IMR-90 (cell line): ENCODE measurements at regions of chr9 and their contacts with region 1.

Region 1: GRCh38 chr9:115013998-115014397 is 83.6 kb upstream of the TNFSF8 start:
- DNase-seq: peak; percentile 82
- ATAC-seq: peak; percentile 45
- H3K4me3 ChIP-seq: no peak overlapping the region
- H3K27ac ChIP-seq: no peak overlapping the region
- H3K4me1 ChIP-seq: peaks cover 10% of the 10 kb centered on the region
- H3K27me3 ChIP-seq: peaks cover 5% of the 10 kb centered on the region
- CTCF ChIP-seq: peak; percentile 91
- POLR2A ChIP-seq: peak; percentile 53; the same call in 1 of the 2 replicates
- RAD21 ChIP-seq: peak; percentile 98

Region 2: DNA sequence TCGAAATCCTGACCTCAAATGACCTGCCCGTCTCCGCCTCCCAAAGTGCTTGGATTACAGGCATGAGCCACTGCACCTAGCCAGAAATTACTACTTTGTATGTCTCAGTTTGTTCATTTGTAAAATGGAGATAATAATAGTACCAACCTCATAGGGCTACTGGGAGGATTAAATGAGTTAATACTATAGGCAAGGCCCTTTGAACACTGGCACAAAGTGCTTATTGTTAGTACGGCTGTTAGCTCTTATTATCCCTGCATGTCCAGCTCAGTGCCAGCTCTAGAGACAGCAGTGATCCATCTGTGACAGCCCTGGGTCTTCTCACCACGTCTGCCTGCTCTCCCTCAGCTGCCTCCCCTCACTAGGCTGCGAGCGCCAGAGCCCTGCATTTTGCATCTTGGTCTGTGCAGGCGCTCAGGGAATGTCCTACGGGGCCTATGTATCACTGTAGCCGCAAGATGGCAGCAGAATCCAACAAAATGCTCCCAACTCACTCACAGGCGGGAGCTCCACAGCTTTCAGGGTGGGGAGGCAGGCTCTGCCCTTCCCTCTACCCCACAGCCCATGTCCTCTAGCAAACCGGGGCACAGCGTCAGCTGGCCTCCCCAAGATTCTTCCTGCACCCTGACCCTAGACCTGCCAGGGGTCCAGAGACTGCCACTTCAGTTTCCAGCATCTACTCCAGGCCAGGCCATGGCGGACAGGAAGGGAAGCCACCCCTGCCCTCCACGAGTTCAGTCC is 608.5 kb before region 1 on chr9:
- CTCF ChIA-PET with region 1: interaction called, 5 read pairs
- POLR2A ChIA-PET with region 1: no interaction called
- dilution Hi-C with region 1: no loop called
- in situ Hi-C with region 1: loop called (anchors 10 kb)
- intact Hi-C with region 1: loop called (anchors 1 kb)
- DNase-seq: peak; percentile 78
- ATAC-seq: peak; percentile 99
- H3K4me3 ChIP-seq: no peak overlapping the region
- H3K27ac ChIP-seq: no peak overlapping the region
- H3K4me1 ChIP-seq: no peaks in the 10 kb centered on the region
- H3K27me3 ChIP-seq: peaks cover 5% of the 10 kb centered on the region; the same call in 1 of the 2 replicates
- CTCF ChIP-seq: peak; percentile 93
- POLR2A ChIP-seq: no peak
- RAD21 ChIP-seq: peak; percentile 95

Region 3: GRCh38 chr9:114434878-114435311 is 579.1 kb before region 1 on chr9:
- CTCF ChIA-PET with region 1: no interaction called
- POLR2A ChIA-PET with region 1: no interaction called
- dilution Hi-C with region 1: no loop called
- in situ Hi-C with region 1: no loop called
- intact Hi-C with region 1: loop called (anchors 10 kb)
- DNase-seq: peak; percentile 37
- ATAC-seq: peak; percentile 91
- H3K4me3 ChIP-seq: no peak overlapping the region
- H3K27ac ChIP-seq: no peak overlapping the region
- H3K4me1 ChIP-seq: no peaks in the 10 kb centered on the region
- H3K27me3 ChIP-seq: peaks cover 13% of the 10 kb centered on the region
- CTCF ChIP-seq: peak; percentile 69
- POLR2A ChIP-seq: no peak
- RAD21 ChIP-seq: peak; percentile 79

Region 4: GRCh38 chr9:114662081-114662989 is 351.7 kb before region 1 on chr9:
- CTCF ChIA-PET with region 1: interaction called, 3 read pairs
- POLR2A ChIA-PET with region 1: no interaction called
- dilution Hi-C with region 1: no loop called
- in situ Hi-C with region 1: loop called (anchors 5 kb)
- intact Hi-C with region 1: loop called (anchors 1 kb)
- DNase-seq: peak; percentile 33
- ATAC-seq: peak; percentile 98
- H3K4me3 ChIP-seq: no peak overlapping the region
- H3K27ac ChIP-seq: no peak overlapping the region
- H3K4me1 ChIP-seq: no peaks in the 10 kb centered on the region
- H3K27me3 ChIP-seq: peaks cover 30% of the 10 kb centered on the region
- CTCF ChIP-seq: peak; percentile 84
- POLR2A ChIP-seq: no peak
- RAD21 ChIP-seq: peak; percentile 92

Region 5: DNA sequence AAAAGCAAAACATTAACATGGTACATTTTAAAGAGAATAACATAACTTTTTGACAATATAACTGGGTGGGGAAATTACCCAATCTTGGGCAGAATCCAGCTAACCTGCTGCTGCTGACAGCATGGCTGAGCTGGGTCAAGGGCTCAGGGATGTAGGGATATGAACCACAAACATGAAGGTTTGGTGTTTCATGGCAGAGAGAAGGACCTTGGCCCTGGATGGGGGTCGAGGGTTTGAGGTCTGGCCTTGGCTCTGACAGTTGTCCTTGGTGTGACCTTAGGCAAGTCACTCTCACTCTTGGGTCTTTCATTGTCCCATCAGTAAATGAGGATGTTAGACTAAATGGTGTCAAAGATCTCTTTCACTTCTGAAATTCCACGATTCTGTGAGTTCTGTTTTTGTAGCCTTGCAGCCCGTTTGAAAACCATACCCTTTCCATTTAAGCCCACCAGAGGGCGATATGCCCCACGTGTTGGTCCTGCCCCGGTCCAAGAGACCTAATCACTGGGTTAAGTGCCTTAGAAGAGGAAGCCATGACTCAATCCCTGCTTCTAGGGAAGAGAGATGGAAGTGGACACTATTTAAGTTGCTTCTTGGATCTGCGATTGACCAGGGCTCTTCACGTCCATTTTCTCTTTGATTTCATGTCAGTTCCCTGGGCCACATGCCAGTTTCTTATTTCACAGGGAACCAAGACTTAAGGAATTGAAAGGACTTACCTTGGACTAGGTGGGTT is 275.2 kb before region 1 on chr9:
- CTCF ChIA-PET with region 1: interaction called, 7 read pairs
- POLR2A ChIA-PET with region 1: no interaction called
- dilution Hi-C with region 1: no loop called
- in situ Hi-C with region 1: loop called (anchors 5 kb)
- intact Hi-C with region 1: loop called (anchors 1 kb)
- DNase-seq: peak; percentile 89
- ATAC-seq: peak; percentile 95
- H3K4me3 ChIP-seq: no peak overlapping the region
- H3K27ac ChIP-seq: no peak overlapping the region
- H3K4me1 ChIP-seq: peaks cover 2% of the 10 kb centered on the region; the same call in 1 of the 2 replicates
- H3K27me3 ChIP-seq: no peaks in the 10 kb centered on the region; the same call in none of the 2 replicates
- CTCF ChIP-seq: peak; percentile 97
- POLR2A ChIP-seq: peak; percentile 58; the same call in 1 of the 2 replicates
- RAD21 ChIP-seq: peak; percentile 99

Region 6: DNA sequence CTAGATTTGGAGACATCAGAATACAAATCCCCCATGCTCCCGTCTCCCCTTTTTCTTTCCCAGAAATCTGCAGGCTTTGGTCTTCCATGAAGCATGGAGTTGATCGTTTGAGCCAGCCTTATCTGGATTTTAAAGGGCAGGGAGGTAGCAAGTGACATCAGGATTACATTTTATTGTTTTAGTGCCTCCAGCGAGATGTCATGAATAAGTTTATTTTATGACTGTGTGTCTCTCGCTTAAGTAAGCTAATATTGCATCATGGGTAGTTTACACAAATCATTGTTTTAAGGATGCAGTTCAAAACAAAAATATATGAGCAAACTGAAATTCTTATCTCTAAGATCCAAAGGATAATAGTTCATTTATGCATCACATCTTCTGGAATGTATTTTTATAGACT is 32.9 kb before region 1 on chr9:
- CTCF ChIA-PET with region 1: no interaction called
- POLR2A ChIA-PET with region 1: no interaction called
- dilution Hi-C with region 1: no loop called
- in situ Hi-C with region 1: no loop called
- intact Hi-C with region 1: no loop called
- DNase-seq: no peak
- ATAC-seq: no peak; the same call in 1 of the 2 replicates
- H3K4me3 ChIP-seq: no peak overlapping the region
- H3K27ac ChIP-seq: no peak overlapping the region
- H3K4me1 ChIP-seq: no peaks in the 10 kb centered on the region
- H3K27me3 ChIP-seq: peaks cover 36% of the 10 kb centered on the region
- CTCF ChIP-seq: no peak
- POLR2A ChIP-seq: no peak
- RAD21 ChIP-seq: no peak

Region 7: GRCh38 chr9:115211413-115212124 is 197.6 kb after region 1 on chr9:
- CTCF ChIA-PET with region 1: no interaction called
- POLR2A ChIA-PET with region 1: no interaction called
- dilution Hi-C with region 1: no loop called
- in situ Hi-C with region 1: no loop called
- intact Hi-C with region 1: loop called (anchors 5 kb)
- DNase-seq: peak; percentile 62
- ATAC-seq: peak; percentile 25
- H3K4me3 ChIP-seq: no peak overlapping the region
- H3K27ac ChIP-seq: 0 out of 2 replicates have a peak overlapping the region, but pooled peaks have one; percentile 2
- H3K4me1 ChIP-seq: peaks cover 22% of the 10 kb centered on the region
- H3K27me3 ChIP-seq: no peaks in the 10 kb centered on the region
- CTCF ChIP-seq: no peak
- POLR2A ChIP-seq: no peak
- RAD21 ChIP-seq: no peak

Region 8: DNA sequence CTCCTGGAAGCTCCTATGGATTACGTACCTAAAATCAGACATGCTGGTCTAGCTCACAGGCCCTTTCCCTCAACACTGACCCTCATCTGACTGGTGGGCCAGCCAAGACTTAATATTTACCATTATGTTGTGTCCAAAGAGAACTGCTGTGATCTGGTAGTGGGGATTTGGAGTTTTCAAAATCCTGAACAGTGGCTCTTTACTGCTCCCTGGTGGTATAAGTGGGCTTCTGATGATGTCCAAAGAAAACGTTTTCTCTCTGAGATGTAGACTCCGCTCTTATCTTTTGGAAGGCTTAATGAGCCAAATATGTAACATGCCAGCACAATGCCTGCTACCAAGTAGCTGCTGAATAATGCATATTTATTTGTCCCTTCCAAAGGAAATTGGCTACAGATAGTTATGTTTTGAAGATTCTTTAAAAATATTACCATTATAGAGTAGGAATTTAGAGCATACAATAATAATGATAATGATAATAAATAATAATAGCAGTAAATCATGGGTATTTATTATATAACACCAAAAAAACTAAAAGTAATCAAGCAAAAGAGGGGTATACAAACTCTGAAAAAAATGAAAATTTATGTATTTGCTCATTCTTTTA is 510.6 kb after region 1 on chr9:
- CTCF ChIA-PET with region 1: interaction called, 3 read pairs
- POLR2A ChIA-PET with region 1: no interaction called
- dilution Hi-C with region 1: no loop called
- in situ Hi-C with region 1: loop called (anchors 10 kb)
- intact Hi-C with region 1: loop called (anchors 1 kb)
- DNase-seq: peak; percentile 77
- ATAC-seq: peak; percentile 95
- H3K4me3 ChIP-seq: no peak overlapping the region
- H3K27ac ChIP-seq: no peak overlapping the region
- H3K4me1 ChIP-seq: peaks cover 2% of the 10 kb centered on the region
- H3K27me3 ChIP-seq: no peaks in the 10 kb centered on the region
- CTCF ChIP-seq: peak; percentile 89
- POLR2A ChIP-seq: no peak
- RAD21 ChIP-seq: peak; percentile 93